Activated CD4-positive, alpha-beta T cell treated with anti-CD3 and anti-CD28 coated beads for 36 hours (primary cell): ENCODE measurements at regions of chr7 and their contacts with region 1.

Region 1: DNA sequence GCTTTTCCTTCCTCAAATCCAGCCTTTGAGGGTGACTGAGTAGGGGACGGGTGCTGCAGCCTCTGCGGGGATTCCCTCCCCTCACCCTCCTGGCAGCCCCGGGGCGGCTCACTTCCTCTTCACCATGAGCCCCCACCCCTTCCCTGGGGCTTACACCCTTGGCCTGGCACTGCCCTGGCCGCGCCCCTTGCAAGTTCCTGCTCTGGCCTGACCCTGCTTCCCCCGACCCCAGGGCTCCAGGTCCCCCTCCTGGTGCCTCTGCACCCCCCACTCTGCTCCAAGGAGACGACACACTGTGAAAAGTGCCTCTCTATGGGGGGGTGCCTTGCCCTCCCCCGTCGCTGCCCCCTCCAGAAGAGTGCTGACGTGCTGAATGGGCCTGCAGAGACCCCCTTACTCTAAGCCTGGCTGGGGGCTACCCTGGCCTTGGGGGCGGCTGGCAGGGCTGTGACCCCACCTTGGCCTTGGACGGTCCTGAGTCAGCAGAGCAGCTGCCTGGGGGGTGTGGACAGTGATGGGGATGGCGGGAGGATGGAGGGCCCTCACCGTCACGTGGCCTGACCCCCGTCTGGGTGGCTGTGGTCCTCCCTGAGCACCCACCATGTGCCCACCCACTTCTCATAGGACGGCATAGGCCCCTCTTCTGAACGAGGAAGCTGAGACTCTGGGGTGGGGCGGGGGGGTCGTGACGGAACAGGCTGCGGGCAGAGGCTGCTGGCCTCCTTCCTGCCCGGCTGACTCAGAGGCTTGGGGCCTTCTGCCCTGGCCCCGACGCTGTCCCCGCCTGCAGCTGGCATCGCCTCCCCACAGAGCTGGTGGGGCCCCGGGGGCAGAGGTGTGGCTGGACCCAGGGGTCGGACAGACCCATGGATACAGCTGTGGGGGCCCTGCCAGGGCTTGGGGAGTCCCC is 9.8 kb downstream of the LFNG start:
- DNase-seq: peak; percentile 79
- ATAC-seq: peak; percentile 58
- H3K4me3 Mint-ChIP-seq: peak overlapping the region; percentile 61
- H3K27ac Mint-ChIP-seq: peak overlapping the region; percentile 94
- H3K4me1 Mint-ChIP-seq: peaks cover 47% of the 10 kb centered on the region
- H3K27me3 Mint-ChIP-seq: no peaks in the 10 kb centered on the region

Region 2: DNA sequence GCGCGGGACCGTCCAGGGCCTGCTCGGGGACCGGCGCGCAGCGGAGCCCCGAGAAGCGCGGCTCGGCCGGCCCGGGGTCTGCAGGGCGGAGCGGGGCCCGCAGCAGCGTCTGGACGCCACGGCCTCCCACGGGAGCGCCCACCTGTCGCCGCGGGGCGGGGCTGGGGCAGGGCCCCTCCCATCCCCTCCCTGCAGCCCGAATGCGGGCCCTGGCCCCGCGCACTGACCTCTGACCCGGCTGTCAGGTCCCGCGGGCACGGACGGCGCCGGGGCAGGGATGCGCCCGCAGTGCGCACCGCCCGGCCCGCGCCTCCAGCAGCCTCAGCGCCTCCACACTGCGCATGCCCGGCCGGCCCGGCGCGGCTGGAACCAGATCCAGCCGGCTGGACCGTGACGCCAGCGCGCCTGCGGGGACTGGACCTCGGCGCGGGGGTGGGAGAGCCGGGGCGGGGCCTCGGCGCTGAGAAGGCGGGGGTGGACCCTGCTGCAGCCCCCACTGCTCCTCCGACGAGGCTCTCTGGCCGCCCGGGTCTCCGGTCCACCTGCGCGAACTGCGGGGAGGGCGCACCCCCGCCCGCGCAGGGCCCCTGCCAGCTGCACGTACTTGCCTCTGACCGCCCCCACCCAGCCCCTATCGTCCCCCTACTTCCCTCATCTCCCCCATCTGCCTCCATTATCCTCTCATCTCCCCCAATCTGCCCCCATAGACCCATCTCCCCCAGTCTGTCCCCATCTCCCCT is 1501.2 kb before region 1 on chr7:
- CTCF ChIA-PET with region 1: no interaction called
- POLR2A ChIA-PET with region 1: no interaction called
- intact Hi-C with region 1: loop called in 1 of 2 experiments (anchors 5 kb)
- DNase-seq: peak; percentile 95
- ATAC-seq: peak; percentile 87
- H3K4me3 Mint-ChIP-seq: peak overlapping the region; percentile 69
- H3K27ac Mint-ChIP-seq: peak overlapping the region; percentile 75
- H3K4me1 Mint-ChIP-seq: peaks cover 28% of the 10 kb centered on the region
- H3K27me3 Mint-ChIP-seq: no peaks in the 10 kb centered on the region

Region 3: DNA sequence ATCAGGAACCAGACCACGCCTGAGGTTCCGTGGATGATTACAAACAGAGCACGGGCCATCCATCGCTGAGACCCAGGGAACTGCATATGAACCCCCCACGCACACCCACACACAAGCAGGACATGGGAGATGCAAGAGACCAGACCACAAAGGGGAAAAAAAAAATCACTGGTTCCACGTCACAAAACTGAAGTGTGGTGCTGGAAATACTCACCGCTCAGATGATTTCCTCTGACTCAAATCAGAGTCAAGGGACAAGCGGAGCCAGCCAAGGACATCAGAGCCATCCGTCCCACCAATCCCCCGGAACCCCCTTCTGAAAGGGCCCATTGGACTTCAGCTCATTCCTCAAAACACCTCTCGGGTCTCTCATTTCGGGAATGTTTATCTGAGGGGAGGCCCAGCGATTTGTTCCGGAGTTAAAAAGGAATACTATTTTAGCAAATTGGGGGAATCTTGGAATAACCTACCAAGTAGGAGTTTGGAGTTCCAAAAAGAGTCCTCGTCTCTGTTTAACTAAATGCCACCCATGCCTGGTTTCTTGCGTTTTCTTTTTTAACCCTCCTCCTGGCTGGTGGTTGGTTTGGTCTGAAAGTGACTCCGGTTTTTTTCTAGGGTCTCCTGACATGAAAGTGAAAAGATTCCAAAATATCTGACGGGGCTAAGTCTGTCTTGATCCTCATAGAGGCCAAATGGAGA is 230.1 kb before region 1 on chr7:
- CTCF ChIA-PET with region 1: no interaction called
- POLR2A ChIA-PET with region 1: no interaction called
- intact Hi-C with region 1: no loop called
- DNase-seq: peak; percentile 72
- ATAC-seq: peak; percentile 66
- H3K4me3 Mint-ChIP-seq: no peak overlapping the region
- H3K27ac Mint-ChIP-seq: peak overlapping the region; percentile 71
- H3K4me1 Mint-ChIP-seq: peaks cover 24% of the 10 kb centered on the region
- H3K27me3 Mint-ChIP-seq: no peaks in the 10 kb centered on the region